H1 (cell line): ENCODE measurements at regions of chr5 and their contacts with region 1.

Region 1: GRCh38 chr5:96601811-96602244 is 60.3 kb upstream of the CAST start:
- DNase-seq: peak in 1 of 2 experiments; percentile 58
- H3K4me3 ChIP-seq: no peak overlapping the region
- H3K27ac ChIP-seq: no peak overlapping the region
- H3K4me1 ChIP-seq: peaks cover 0 to 5% (median 0%) of the 10 kb centered on the region in 4 experiments; a peak in 1 of 7 replicates
- H3K27me3 ChIP-seq: no peaks in the 10 kb centered on the region
- CTCF ChIP-seq: peak; percentile 16 to 76 (median 75)
- EP300 ChIP-seq: no peak
- POLR2A ChIP-seq: no peak
- RAD21 ChIP-seq: peak; percentile 60 to 72

Region 2: DNA sequence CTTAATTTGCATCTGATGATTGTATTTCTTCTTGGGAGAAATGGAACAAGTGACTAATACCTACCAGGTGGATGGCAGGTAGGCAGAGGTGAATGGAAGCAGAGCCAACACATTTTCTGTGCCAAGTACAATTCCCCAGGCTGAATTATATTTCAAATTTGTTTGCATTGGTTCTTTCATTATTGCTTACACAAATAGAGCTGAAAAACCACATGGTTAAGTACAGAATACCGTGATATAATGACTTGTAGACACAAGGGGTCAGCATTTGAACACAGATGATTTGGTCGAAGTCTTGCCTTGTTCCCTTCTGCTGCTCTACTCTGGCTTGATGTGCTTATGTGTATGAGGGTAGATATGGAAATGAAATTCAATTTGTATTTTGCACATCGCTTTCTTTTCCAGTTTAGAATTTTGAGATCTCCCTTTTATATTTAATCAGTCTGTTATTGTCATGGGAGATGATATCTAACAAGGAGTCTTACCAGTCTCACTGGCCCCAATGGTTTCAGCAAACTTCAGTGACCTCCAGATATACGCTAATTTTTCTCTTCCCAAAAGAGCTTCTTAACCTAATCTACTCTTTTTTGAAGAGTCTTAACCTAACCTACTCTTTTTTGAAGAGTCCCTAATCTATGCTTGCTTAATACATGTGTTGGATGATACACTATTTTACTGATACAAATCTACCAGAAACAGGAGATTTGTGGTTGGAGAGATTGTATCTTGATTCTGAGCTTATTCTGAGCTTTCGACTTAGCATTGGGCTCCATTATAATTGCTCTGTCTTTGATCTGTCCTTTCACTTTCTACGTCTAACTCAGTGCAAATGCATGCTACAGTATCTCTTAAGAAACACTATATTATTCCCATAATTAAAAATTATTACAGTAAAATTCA is 256.9 kb before region 1 on chr5:
- CTCF ChIA-PET with region 1: interaction called, 118 read pairs
- POLR2A ChIA-PET with region 1: no interaction called
- DNase-seq: no peak
- H3K4me3 ChIP-seq: no peak overlapping the region
- H3K27ac ChIP-seq: no peak overlapping the region
- H3K4me1 ChIP-seq: no peaks in the 10 kb centered on the region
- H3K27me3 ChIP-seq: no peaks in the 10 kb centered on the region
- CTCF ChIP-seq: peak in 2 of 3 experiments; percentile 66 to 72; a peak in 3 of 4 replicates
- EP300 ChIP-seq: no peak
- POLR2A ChIP-seq: no peak
- RAD21 ChIP-seq: peak; percentile 91 to 94

Region 3: GRCh38 chr5:96350678-96351077 is 251.2 kb before region 1 on chr5:
- CTCF ChIA-PET with region 1: interaction called, 118 read pairs
- POLR2A ChIA-PET with region 1: no interaction called
- DNase-seq: no peak
- H3K4me3 ChIP-seq: no peak overlapping the region
- H3K27ac ChIP-seq: no peak overlapping the region
- H3K4me1 ChIP-seq: no peaks in the 10 kb centered on the region
- H3K27me3 ChIP-seq: no peaks in the 10 kb centered on the region
- CTCF ChIP-seq: no peak
- EP300 ChIP-seq: no peak
- POLR2A ChIP-seq: no peak
- RAD21 ChIP-seq: no peak

Region 4: DNA sequence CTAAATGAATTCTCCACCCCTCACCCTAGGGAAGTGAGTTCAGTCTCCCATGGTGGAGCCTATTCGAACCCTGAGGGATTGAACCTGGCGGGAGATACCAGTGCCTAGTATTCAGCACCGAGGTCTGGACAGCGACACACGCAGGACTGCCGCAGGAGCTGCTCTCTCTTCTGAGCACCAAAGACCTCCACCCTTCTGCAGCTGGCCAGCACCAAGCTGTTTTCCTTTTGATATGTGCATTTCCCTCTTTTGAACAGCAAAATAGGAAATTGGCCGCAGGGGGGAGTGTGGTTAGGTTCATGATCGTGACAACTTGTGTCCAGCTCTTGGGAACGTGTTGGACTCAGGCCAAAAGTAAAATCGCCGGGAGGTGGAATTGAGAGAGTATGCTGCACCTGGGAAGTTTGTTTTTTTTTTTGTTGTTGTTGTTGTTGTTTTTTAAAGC is 167.6 kb before region 1 on chr5:
- CTCF ChIA-PET with region 1: interaction called, 33 read pairs
- POLR2A ChIA-PET with region 1: no interaction called
- DNase-seq: peak in 1 of 2 experiments; percentile 87
- H3K4me3 ChIP-seq: peak overlapping the region; percentile 4 to 86 (median 34); a peak in 6 of 8 replicates
- H3K27ac ChIP-seq: no peak overlapping the region
- H3K4me1 ChIP-seq: peaks cover 0 to 9% (median 5%) of the 10 kb centered on the region in 4 experiments; a peak in 4 of 7 replicates
- H3K27me3 ChIP-seq: peaks cover 4 to 37% (median 33%) of the 10 kb centered on the region in 4 experiments
- CTCF ChIP-seq: peak in 1 of 3 experiments; percentile 5; a peak in 1 of 4 replicates
- EP300 ChIP-seq: no peak
- POLR2A ChIP-seq: no peak
- RAD21 ChIP-seq: peak; percentile 25 to 26

Region 5: GRCh38 chr5:96463106-96463505 is 138.7 kb before region 1 on chr5:
- CTCF ChIA-PET with region 1: no interaction called
- POLR2A ChIA-PET with region 1: no interaction called
- DNase-seq: no peak
- H3K4me3 ChIP-seq: no peak overlapping the region
- H3K27ac ChIP-seq: no peak overlapping the region
- H3K4me1 ChIP-seq: no peaks in the 10 kb centered on the region
- H3K27me3 ChIP-seq: no peaks in the 10 kb centered on the region
- CTCF ChIP-seq: no peak
- EP300 ChIP-seq: no peak
- POLR2A ChIP-seq: no peak
- RAD21 ChIP-seq: no peak

Region 6: GRCh38 chr5:96584712-96585111 is 17.1 kb before region 1 on chr5:
- CTCF ChIA-PET with region 1: interaction called, 36 read pairs
- POLR2A ChIA-PET with region 1: no interaction called
- DNase-seq: no peak
- H3K4me3 ChIP-seq: no peak overlapping the region
- H3K27ac ChIP-seq: no peak overlapping the region
- H3K4me1 ChIP-seq: no peaks in the 10 kb centered on the region
- H3K27me3 ChIP-seq: no peaks in the 10 kb centered on the region
- CTCF ChIP-seq: no peak
- EP300 ChIP-seq: no peak
- POLR2A ChIP-seq: no peak
- RAD21 ChIP-seq: no peak

Region 7: DNA sequence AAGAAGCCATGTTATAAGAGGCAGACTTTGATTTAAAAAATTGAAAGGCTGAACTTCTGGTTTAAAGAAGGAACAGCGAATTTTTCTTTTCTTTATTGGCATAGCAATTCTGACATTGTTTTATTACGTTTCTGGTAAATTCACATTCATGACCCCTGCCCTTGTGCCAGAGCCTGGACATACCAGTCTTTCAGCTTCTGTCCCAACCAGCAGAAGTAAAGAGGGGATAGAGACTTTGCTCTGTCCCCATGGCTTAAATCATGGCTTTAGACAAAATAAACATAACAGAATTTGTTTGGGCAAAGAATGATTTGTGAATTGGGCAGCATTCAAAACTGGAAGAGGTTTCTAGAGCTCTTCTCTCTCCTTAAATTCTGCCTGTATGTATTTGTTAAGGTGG is 75.7 kb after region 1 on chr5:
- CTCF ChIA-PET with region 1: no interaction called
- POLR2A ChIA-PET with region 1: no interaction called
- DNase-seq: no peak
- H3K4me3 ChIP-seq: no peak overlapping the region
- H3K27ac ChIP-seq: no peak overlapping the region
- H3K4me1 ChIP-seq: no peaks in the 10 kb centered on the region
- H3K27me3 ChIP-seq: no peaks in the 10 kb centered on the region
- CTCF ChIP-seq: no peak
- EP300 ChIP-seq: no peak
- POLR2A ChIP-seq: no peak
- RAD21 ChIP-seq: no peak